ENCODE measurements at regions of chr1 and their contacts with region 1.

Region 1: GRCh38 chr1:53860967-53861411 is 22.9 kb upstream of the NDC1 start:
- DNase-seq: peak; percentile 64
- H3K4me3 ChIP-seq: peak overlapping the region in 1 of 2 experiments; percentile 25; a peak in 1 of 4 replicates
- H3K27ac ChIP-seq: no peak overlapping the region
- H3K4me1 ChIP-seq: no peaks in the 10 kb centered on the region
- H3K27me3 ChIP-seq: no peaks in the 10 kb centered on the region
- CTCF ChIP-seq: peak; percentile 88
- EP300 ChIP-seq: no peak
- RAD21 ChIP-seq: peak; percentile 87

Region 2: DNA sequence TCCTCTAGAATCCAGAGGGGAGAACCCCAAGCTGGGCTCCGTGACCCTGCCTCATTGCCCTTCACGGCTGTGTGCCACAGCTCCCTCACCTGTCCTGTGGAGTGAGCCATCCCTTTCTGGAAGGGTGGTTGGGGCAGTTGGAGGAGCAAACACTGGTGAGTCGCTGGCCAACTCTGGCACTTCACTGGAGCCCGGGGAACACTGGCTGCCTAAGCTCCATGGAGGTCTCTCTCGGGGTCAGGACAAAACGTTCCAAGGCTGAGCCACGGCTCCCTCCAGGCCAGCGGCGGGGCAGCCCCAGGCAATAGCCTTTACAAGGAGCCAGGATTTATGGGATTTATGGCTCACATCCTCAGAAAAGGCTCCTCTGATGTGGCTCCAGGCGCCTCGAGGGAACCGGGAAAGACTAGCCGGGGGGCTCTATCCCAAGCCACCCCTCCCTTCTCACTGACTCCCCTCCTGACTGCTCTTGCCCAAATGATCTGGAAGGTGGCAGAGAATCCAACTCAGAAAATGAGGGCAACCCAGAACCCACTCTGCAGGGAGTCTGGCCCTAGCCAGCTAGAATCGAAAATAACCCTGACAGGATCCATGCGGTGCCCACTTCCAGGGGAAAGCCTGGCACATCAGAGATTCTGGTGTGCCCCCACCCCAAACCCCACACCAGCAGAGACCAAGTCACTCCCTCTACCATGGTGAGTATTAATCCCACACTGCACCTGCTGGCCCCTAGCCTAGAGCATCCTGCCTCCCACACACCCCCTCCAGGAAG is 197.3 kb before region 1 on chr1:
- CTCF ChIA-PET with region 1: no interaction called
- POLR2A ChIA-PET with region 1: no interaction called
- DNase-seq: no peak
- H3K4me3 ChIP-seq: no peak overlapping the region
- H3K27ac ChIP-seq: no peak overlapping the region
- H3K4me1 ChIP-seq: peaks cover 0 to 2% of the 10 kb centered on the region in 2 experiments; a peak in 1 of 4 replicates
- H3K27me3 ChIP-seq: no peaks in the 10 kb centered on the region
- CTCF ChIP-seq: no peak
- EP300 ChIP-seq: no peak
- RAD21 ChIP-seq: no peak

Region 3: DNA sequence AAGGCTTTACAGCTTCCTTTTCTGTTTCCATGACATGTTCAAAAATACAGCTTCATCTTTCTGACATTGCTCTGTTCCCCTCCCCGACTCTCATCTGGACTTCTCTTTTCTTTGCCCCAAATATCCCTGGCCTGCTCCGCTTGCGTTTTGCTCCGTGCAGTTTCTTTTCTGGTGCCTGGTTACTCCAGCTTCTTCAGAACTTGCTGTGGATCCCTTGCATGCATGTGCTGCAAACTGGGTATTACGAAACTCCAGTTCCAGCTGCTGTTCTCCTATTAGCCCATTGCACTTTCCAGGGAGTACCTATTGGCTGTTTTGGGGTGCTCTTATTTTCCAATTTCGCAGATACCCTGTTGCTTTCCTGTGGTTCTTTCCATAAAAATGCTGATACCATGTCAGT is 13.0 kb before region 1 on chr1:
- CTCF ChIA-PET with region 1: interaction called, 51 read pairs
- POLR2A ChIA-PET with region 1: no interaction called
- DNase-seq: no peak
- H3K4me3 ChIP-seq: no peak overlapping the region
- H3K27ac ChIP-seq: no peak overlapping the region
- H3K4me1 ChIP-seq: no peaks in the 10 kb centered on the region
- H3K27me3 ChIP-seq: no peaks in the 10 kb centered on the region
- CTCF ChIP-seq: no peak
- EP300 ChIP-seq: no peak
- RAD21 ChIP-seq: no peak

Region 4: GRCh38 chr1:53889304-53890298 is 28.6 kb after region 1 on chr1 and contains the start of gene YIPF1:
- CTCF ChIA-PET with region 1: interaction called, 10 read pairs
- POLR2A ChIA-PET with region 1: no interaction called
- DNase-seq: peak; percentile 94
- H3K4me3 ChIP-seq: peak within 1 kb of the TSS; percentile 80 to 100
- H3K27ac ChIP-seq: peak within 1 kb of the TSS; percentile 54 to 75
- H3K4me1 ChIP-seq: peaks cover 0 to 7% of the 10 kb centered on the region in 2 experiments; a peak in 2 of 4 replicates
- H3K27me3 ChIP-seq: no peaks in the 10 kb centered on the region
- CTCF ChIP-seq: no peak
- EP300 ChIP-seq: no peak
- RAD21 ChIP-seq: no peak
- polyA plus RNA-seq, gene YIPF1: 23.1 and 31.7 TPM in 2 replicates

Region 5: DNA sequence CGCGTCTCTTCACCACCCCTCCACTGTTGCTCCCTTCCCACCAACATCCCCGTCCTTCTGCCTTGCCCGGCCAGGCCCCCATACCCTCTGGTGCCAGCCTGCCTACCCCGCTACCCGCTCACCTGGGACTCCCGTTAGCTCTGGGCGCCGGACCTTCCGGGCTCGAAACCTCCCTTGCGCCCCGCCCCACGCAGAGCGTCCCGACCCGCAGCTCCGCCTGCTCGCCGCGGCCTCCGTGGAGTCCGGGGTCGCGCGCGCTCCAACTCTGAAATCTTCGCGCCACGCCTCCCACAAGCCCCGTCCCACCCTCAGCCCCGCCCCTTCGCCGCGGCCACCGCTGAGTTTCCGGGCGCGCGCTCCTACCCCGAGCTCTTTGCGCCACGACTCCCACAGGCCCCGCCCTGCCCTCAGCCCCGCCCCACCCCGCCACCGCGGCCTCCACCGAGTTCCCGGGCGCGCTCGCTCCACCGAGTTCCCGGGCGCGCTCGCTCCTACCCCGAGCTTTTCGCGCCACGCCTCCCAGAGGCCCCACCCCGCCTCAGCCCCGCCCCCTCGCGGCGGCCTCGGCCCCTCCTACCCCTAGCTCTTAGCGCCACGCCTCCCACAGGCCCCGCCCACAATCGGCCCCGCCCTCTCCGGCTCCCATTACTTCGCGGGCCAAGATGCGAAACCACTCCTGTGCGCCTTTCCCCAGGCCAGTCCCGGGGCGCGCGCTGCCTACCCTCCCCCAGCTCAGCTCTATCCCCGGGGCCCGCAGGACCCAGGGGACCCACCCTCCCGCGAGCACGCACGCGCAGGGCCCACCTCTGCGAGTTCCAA is 84.7 kb after region 1 on chr1 and contains the start of gene IFT25:
- CTCF ChIA-PET with region 1: interaction called, 39 read pairs
- POLR2A ChIA-PET with region 1: no interaction called
- DNase-seq: peak; percentile 97
- H3K4me3 ChIP-seq: peak within 1 kb of the TSS; percentile 72 to 95
- H3K27ac ChIP-seq: peak within 1 kb of the TSS; percentile 79 to 92
- H3K4me1 ChIP-seq: peaks cover 11 to 31% of the 10 kb centered on the region in 2 experiments; a peak in 2 of 4 replicates
- H3K27me3 ChIP-seq: no peaks in the 10 kb centered on the region
- CTCF ChIP-seq: no peak
- EP300 ChIP-seq: no peak
- RAD21 ChIP-seq: no peak
- polyA plus RNA-seq, gene IFT25: 25.7 TPM in 2 replicates

Region 6: DNA sequence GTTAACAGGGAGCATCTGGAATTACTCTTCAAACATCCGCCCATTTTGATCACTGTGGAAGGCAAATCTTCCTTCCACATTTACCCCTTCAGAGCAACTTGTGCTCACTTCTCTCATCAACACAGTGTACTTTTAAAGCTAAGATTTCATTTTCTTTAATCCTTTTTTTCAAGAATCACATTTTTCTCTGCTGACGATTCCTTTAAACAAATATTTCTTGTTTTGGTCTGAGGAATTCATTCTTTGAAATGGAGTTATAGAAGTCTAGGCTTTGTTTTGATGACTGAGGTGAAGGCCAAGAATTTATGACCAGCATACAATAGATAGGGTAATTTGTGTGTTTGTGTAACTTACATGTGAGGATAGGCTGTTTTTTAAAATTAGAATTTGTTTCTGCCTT is 110.7 kb after region 1 on chr1:
- CTCF ChIA-PET with region 1: interaction called, 10 read pairs
- POLR2A ChIA-PET with region 1: no interaction called
- DNase-seq: no peak
- H3K4me3 ChIP-seq: no peak overlapping the region
- H3K27ac ChIP-seq: no peak overlapping the region
- H3K4me1 ChIP-seq: no peaks in the 10 kb centered on the region
- H3K27me3 ChIP-seq: no peaks in the 10 kb centered on the region
- CTCF ChIP-seq: no peak
- EP300 ChIP-seq: no peak
- RAD21 ChIP-seq: no peak

Measured in SK-N-SH (cell line).